ENCODE measurements at regions of chr3 and their contacts with region 1.

Region 1: DNA sequence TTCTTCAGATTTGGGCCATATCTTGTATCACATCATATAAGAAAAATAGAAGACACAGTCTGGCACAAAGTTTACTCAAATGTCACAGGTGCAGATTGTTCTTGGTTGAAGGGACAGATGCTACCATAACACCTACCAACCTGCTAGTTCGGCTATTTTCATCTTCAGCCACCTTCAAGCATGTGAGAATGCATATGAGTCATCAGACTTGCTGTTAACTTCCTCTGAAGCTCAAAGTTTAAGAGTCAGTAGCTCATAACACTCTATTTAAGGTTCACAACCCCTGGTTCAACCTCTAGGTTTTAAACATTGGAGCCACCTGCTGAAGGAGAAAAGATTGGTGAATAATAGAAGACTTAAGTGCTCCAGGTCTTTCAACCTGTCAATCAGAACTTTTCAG is 522.8 kb downstream of the NLGN1 start:
- DNase-seq: peak; percentile 36
- H3K4me3 ChIP-seq: no peak overlapping the region
- H3K27ac ChIP-seq: no peak overlapping the region
- H3K4me1 ChIP-seq: peaks cover 5% of the 10 kb centered on the region
- H3K27me3 ChIP-seq: no peaks in the 10 kb centered on the region
- CTCF ChIP-seq: no peak
- POLR2A ChIP-seq: no peak

Region 2: DNA sequence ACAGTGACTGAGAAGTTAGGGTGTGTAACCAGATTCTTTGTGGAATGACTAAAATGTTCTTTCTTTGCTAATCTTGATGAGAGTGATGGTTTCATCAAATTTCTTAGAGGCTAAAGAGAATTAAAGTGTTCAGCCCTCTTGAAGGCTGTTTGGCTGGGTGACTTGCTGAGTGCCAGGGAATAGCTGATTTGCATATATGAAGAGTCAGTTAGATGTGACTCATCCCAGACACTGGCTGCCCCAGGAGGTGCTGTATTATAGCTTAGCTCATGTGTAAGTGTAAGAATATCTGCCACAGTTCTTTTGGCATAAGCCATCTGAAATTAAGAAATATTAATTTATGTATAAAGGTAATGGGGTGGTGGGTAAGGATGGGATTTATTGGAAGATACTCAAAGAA is 12.2 kb after region 1 on chr3:
- CTCF ChIA-PET with region 1: interaction called, 13 read pairs
- POLR2A ChIA-PET with region 1: no interaction called
- dilution Hi-C with region 1: no loop called
- intact Hi-C with region 1: no loop called
- DNase-seq: peak; percentile 62
- H3K4me3 ChIP-seq: no peak overlapping the region
- H3K27ac ChIP-seq: no peak overlapping the region
- H3K4me1 ChIP-seq: peaks cover 2% of the 10 kb centered on the region
- H3K27me3 ChIP-seq: no peaks in the 10 kb centered on the region
- CTCF ChIP-seq: no peak
- POLR2A ChIP-seq: no peak